Activated CD4-positive, alpha-beta T cell treated with anti-CD3 and anti-CD28 coated beads for 36 hours (primary cell): ENCODE measurements at regions of chr14 and their contacts with region 1.

Region 1: GRCh38 chr14:56474419-56475022 is 105.1 kb upstream of the TMEM260 start:
- DNase-seq: no peak
- ATAC-seq: no peak
- H3K4me3 Mint-ChIP-seq: no peak overlapping the region
- H3K27ac Mint-ChIP-seq: no peak overlapping the region
- H3K4me1 Mint-ChIP-seq: no peaks in the 10 kb centered on the region
- H3K27me3 Mint-ChIP-seq: no peaks in the 10 kb centered on the region

Region 2: GRCh38 chr14:55212634-55213033 is 1261.9 kb before region 1 on chr14:
- CTCF ChIA-PET with region 1: interaction called, 3 read pairs
- POLR2A ChIA-PET with region 1: no interaction called
- intact Hi-C with region 1: loop called in 1 of 2 experiments (anchors 10 kb)
- DNase-seq: no peak
- ATAC-seq: no peak
- H3K4me3 Mint-ChIP-seq: no peak overlapping the region
- H3K27ac Mint-ChIP-seq: no peak overlapping the region
- H3K4me1 Mint-ChIP-seq: peaks cover 4% of the 10 kb centered on the region
- H3K27me3 Mint-ChIP-seq: no peaks in the 10 kb centered on the region

Region 3: GRCh38 chr14:55446218-55446654 is 1028.3 kb before region 1 on chr14:
- CTCF ChIA-PET with region 1: interaction called, 4 read pairs
- POLR2A ChIA-PET with region 1: no interaction called
- intact Hi-C with region 1: loop called (anchors 1 to 5 kb)
- DNase-seq: peak; percentile 73
- ATAC-seq: peak; percentile 51
- H3K4me3 Mint-ChIP-seq: no peak overlapping the region
- H3K27ac Mint-ChIP-seq: no peak overlapping the region
- H3K4me1 Mint-ChIP-seq: peaks cover 25% of the 10 kb centered on the region
- H3K27me3 Mint-ChIP-seq: no peaks in the 10 kb centered on the region

Region 4: GRCh38 chr14:55731881-55732498 is 742.5 kb before region 1 on chr14:
- CTCF ChIA-PET with region 1: interaction called, 46 read pairs
- POLR2A ChIA-PET with region 1: no interaction called
- intact Hi-C with region 1: loop called (anchors 1 kb)
- DNase-seq: peak; percentile 68
- ATAC-seq: no peak
- H3K4me3 Mint-ChIP-seq: no peak overlapping the region
- H3K27ac Mint-ChIP-seq: no peak overlapping the region
- H3K4me1 Mint-ChIP-seq: no peaks in the 10 kb centered on the region
- H3K27me3 Mint-ChIP-seq: no peaks in the 10 kb centered on the region

Region 5: GRCh38 chr14:56461276-56462275 is 12.9 kb before region 1 on chr14:
- CTCF ChIA-PET with region 1: interaction called, 12 read pairs
- POLR2A ChIA-PET with region 1: no interaction called
- intact Hi-C with region 1: no loop called
- DNase-seq: no peak
- ATAC-seq: no peak
- H3K4me3 Mint-ChIP-seq: no peak overlapping the region
- H3K27ac Mint-ChIP-seq: no peak overlapping the region
- H3K4me1 Mint-ChIP-seq: no peaks in the 10 kb centered on the region
- H3K27me3 Mint-ChIP-seq: peaks cover 26% of the 10 kb centered on the region